AG04449 (cell line): ENCODE measurements at regions of chr17 and their contacts with region 1.

Region 1: GRCh38 chr17:27601069-27601975 is 29.7 kb upstream of the LGALS9 start:
- DNase-seq: no peak
- H3K4me3 ChIP-seq: no peak overlapping the region
- CTCF ChIP-seq: peak; percentile 85

Region 2: GRCh38 chr17:27245230-27245696 is 356.1 kb before region 1 on chr17:
- CTCF ChIA-PET with region 1: interaction called, 367 read pairs
- POLR2A ChIA-PET with region 1: no interaction called
- DNase-seq: peak; percentile 41
- H3K4me3 ChIP-seq: peak overlapping the region; percentile 16
- CTCF ChIP-seq: peak; percentile 73

Region 3: DNA sequence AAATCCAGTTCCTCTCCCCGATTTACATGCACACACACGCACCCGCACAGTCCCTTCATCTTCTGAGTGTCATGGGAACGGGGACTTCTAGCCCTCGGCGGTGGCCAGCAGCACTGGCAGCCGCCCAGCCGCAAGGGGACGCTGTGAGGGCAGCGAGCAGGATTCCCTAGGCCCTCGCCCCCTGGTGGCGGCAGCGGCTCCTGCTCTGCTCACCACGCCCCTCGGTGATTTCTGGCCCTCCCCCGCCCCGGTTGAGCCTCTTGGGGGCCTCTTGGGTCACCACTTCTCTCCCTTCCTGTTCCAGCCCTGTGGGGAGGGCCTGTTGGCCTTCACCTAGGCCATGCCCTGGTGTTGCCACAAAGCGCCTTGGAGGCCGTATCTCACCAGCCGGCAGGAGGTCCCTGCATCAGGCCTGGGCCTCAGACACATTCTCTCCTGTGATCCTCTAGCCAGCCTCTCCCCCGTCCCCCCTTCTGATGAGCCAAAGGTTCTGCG is 220.3 kb before region 1 on chr17:
- CTCF ChIA-PET with region 1: interaction called, 16 read pairs
- POLR2A ChIA-PET with region 1: interaction called, 3 read pairs
- DNase-seq: no peak
- H3K4me3 ChIP-seq: no peak overlapping the region
- CTCF ChIP-seq: peak; percentile 77

Region 4: DNA sequence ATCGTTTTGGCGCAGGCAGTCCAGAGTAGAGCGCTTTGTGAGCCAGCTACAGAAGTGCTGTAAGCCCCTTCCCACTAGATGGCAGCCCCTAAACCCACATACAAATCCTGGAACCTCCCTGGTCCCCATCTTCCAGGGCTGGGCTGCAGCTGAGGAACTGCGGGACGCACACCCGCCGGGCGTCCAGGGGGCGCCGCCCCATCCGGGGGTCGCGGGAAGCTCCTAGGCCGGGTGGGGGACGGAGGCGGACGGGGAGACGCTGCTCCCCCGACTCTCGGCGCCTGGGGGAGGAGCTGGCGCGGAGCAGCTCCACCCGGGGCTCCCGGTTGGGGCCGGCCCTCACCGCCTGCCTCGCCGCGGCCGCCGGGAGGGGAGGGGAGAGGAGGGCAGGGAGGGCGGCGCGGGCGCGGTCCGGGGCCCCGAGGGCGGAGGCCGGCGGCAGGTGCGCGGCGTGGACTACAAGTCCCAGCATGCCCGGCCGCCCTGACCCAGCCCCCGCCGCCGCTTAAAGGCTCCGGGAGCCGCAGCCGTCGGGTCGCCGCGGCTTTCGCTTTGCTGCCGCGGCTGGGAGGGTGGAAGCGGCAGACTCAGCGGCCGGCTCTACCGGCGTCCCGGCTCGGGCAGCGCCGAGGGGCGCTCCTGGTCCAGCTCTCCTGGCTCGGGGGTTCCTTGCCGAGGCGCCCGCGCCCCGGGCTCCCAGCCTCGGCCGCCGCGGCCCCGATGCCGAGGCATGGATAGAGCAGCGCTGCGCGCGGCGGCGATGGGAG is 145.2 kb before region 1 on chr17 and contains the start of gene KSR1:
- CTCF ChIA-PET with region 1: interaction called, 146 read pairs
- POLR2A ChIA-PET with region 1: no interaction called
- DNase-seq: no peak
- H3K4me3 ChIP-seq: peak within 1 kb of the TSS; percentile 69
- CTCF ChIP-seq: peak; percentile 47

Region 5: GRCh38 chr17:27569257-27569722 is 32.0 kb before region 1 on chr17:
- CTCF ChIA-PET with region 1: interaction called, 14 read pairs
- POLR2A ChIA-PET with region 1: interaction called, 5 read pairs
- DNase-seq: no peak
- H3K4me3 ChIP-seq: no peak overlapping the region
- CTCF ChIP-seq: peak; percentile 64

Region 6: GRCh38 chr17:27654654-27655524 is 53.6 kb after region 1 on chr17:
- CTCF ChIA-PET with region 1: interaction called, 389 read pairs
- POLR2A ChIA-PET with region 1: no interaction called
- DNase-seq: no peak
- H3K4me3 ChIP-seq: no peak overlapping the region
- CTCF ChIP-seq: peak; percentile 78

Region 7: GRCh38 chr17:27929990-27930389 is 328.7 kb after region 1 on chr17:
- CTCF ChIA-PET with region 1: no interaction called
- POLR2A ChIA-PET with region 1: no interaction called
- DNase-seq: no peak
- H3K4me3 ChIP-seq: no peak overlapping the region
- CTCF ChIP-seq: no peak

Region 8: GRCh38 chr17:28018439-28019070 is 417.2 kb after region 1 on chr17:
- CTCF ChIA-PET with region 1: no interaction called
- POLR2A ChIA-PET with region 1: no interaction called
- DNase-seq: no peak
- H3K4me3 ChIP-seq: no peak overlapping the region
- CTCF ChIP-seq: no peak